ENCODE measurements at regions of chr20 and their contacts with region 1.

Region 1: GRCh38 chr20:38926142-38926933 is at the start of gene FAM83D:
- DNase-seq: peak; percentile 97
- H3K4me3 Mint-ChIP-seq: peak within 1 kb of the TSS; percentile 80
- H3K27ac Mint-ChIP-seq: peak within 1 kb of the TSS; percentile 30
- H3K4me1 Mint-ChIP-seq: peaks cover 17% of the 10 kb centered on the region
- H3K27me3 Mint-ChIP-seq: no peaks in the 10 kb centered on the region
- total RNA-seq, gene FAM83D: 13.6 TPM

Region 2: DNA sequence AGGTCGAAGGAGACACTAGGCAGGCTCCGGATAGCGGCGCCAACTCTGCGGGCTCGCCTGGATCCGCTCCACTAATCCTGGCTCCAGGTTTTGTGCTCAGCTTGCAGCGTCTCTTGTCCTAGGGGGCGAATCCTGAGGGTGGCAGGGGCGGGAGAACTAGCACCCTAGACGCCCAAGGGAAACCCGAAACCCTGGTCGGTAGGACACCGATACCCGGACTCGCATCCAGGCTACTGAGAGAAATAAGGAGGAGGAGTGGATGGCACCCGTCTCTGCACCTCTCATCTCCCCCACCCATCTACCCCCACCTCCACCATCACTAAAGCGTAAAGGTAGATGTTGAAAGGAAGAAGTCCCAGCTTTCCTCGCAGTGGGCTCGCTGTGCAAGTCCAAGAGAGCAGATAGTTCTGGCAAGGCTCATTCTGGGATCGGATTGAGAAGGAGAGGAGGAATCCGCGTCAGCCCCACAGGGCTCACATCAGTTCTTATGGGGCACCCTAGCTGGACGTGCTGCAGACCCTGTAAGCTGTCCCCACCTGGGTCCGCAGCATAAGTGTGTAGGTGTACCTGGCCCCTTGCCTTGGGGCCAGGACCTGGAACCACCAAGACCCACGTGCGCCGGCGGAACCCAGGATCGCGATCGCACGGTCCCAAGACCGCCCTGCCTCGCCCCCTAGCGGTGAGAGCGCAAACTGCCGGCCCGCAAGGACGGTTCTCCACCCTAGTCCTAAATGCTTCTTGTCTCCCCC is 195.2 kb before region 1 on chr20:
- CTCF ChIA-PET with region 1: no interaction called
- intact Hi-C with region 1: loop called (anchors 1 kb)
- DNase-seq: peak; percentile 85
- H3K4me3 Mint-ChIP-seq: peak overlapping the region; percentile 61
- H3K27ac Mint-ChIP-seq: no peak overlapping the region
- H3K4me1 Mint-ChIP-seq: peaks cover 39% of the 10 kb centered on the region
- H3K27me3 Mint-ChIP-seq: peaks cover 85% of the 10 kb centered on the region

Region 3: DNA sequence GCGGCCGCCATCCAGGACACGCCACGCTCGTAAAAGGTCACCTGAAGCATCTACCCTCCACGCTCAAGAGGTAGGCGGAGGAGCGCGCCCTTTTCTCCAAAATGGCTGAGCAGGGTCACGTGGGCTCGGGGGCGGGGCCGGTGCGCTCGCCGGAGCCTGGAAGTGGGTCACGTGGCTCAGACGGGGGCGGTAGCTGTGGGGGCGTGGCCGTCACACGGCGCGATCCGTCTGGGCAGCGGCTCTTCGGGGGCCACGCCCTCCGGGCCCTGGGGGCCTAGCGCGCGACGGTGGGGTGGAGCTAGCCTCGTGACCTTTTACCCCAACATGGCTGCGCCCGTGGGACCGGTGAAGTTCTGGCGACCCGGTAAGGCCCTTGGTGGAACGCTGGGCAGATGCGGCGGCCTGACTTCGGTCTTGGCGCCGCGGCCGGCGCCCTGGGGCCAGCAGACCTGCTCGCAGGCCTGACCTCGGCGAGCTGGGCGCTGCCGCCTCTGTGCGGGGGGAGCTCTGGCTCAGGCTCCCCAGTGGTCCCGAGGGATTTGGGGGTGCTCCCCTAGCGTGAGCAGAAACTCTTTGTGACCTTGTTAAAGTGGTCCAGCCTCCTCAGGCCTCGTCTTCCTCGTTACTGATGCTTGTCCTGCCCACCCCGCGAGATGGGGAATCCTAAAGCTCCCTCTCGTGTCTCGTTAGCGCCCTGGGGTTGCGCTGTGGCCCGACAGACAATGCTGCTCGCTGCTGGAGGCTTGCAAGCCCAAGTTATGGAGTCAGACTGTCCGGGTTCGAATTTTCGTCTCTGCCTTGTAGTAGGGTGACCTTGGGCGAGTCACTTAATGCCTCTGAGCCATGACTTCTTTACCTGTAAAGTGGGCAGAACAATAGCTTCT is 35.9 kb after region 1 on chr20 and contains the start of gene DHX35:
- CTCF ChIA-PET with region 1: interaction called, 15 read pairs
- intact Hi-C with region 1: loop called (anchors 1 kb)
- DNase-seq: peak; percentile 99
- H3K4me3 Mint-ChIP-seq: peak within 1 kb of the TSS; percentile 95
- H3K27ac Mint-ChIP-seq: peak within 1 kb of the TSS; percentile 98
- H3K4me1 Mint-ChIP-seq: peaks cover 32% of the 10 kb centered on the region
- H3K27me3 Mint-ChIP-seq: no peaks in the 10 kb centered on the region
- total RNA-seq, gene DHX35: 9.5 to 10.3 TPM

Measured in activated naive CD4-positive, alpha-beta T cell treated with anti-CD3 and anti-CD28 coated beads for 36 hours (primary cell).